ENCODE measurements at regions of chr5 and their contacts with region 1.

Region 1: GRCh38 chr5:39283231-39283818 is 64.0 kb upstream of the FYB1 start:
- DNase-seq: peak; percentile 65 to 83
- ATAC-seq: peak; percentile 98 to 100
- H3K4me3 ChIP-seq: no peak overlapping the region
- H3K27ac ChIP-seq: peak overlapping the region; percentile 65 to 79
- H3K4me1 ChIP-seq: peaks cover 12% of the 10 kb centered on the region; the same call in 1 of the 3 replicates
- CTCF ChIP-seq: peak; percentile 84
- EP300 ChIP-seq: no peak
- POLR2A ChIP-seq: no peak
- RAD21 ChIP-seq: peak; percentile 95 to 96

Region 2: DNA sequence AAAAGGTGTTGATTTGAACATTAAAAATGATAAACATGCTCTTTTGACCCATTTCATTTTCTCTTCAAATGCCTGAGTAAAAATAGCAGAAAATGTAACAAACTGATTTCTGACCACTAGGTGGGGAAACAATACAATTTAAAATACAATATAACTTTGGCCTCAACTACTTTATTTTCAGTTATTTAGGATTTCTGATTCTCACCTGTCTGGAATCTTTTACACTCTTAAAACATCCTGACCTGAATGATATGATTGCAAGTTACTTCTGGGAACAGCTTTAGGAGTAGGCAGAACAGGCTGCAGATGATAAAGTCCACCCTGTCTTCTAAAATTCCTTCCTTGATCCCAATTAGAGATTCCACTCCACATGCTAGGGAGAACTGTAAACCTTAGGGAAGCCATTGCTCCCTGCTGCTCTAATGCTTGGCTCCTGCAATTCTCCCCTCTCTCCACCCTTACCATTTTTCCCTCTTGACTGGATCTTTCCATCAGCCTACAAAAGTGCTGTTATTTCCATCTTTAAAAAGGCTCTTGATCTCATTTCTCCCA is 134.3 kb before region 1 on chr5:
- CTCF ChIA-PET with region 1: interaction called, 20 read pairs
- POLR2A ChIA-PET with region 1: no interaction called
- DNase-seq: peak in 1 of 2 experiments; percentile 38
- ATAC-seq: peak in 1 of 2 experiments; percentile 67; a peak in 3 of 6 replicates
- H3K4me3 ChIP-seq: no peak overlapping the region
- H3K27ac ChIP-seq: peak overlapping the region; percentile 52 to 66; a peak in 5 of 6 replicates
- H3K4me1 ChIP-seq: peaks cover 9% of the 10 kb centered on the region
- CTCF ChIP-seq: peak; percentile 66
- EP300 ChIP-seq: no peak
- POLR2A ChIP-seq: no peak
- RAD21 ChIP-seq: peak; percentile 78 to 82

Region 3: GRCh38 chr5:39211773-39212172 is 71.6 kb before region 1 on chr5:
- CTCF ChIA-PET with region 1: interaction called, 107 read pairs
- POLR2A ChIA-PET with region 1: no interaction called
- DNase-seq: no peak
- ATAC-seq: no peak
- H3K4me3 ChIP-seq: no peak overlapping the region
- H3K27ac ChIP-seq: no peak overlapping the region
- H3K4me1 ChIP-seq: 0 out of 3 replicates have a peak, but pooled peaks cover 9% of the 10 kb centered on the region
- CTCF ChIP-seq: no peak
- EP300 ChIP-seq: no peak
- POLR2A ChIP-seq: no peak
- RAD21 ChIP-seq: no peak

Region 4: GRCh38 chr5:39266442-39266841 is 16.9 kb before region 1 on chr5:
- CTCF ChIA-PET with region 1: interaction called, 14 read pairs
- POLR2A ChIA-PET with region 1: no interaction called
- DNase-seq: peak in 1 of 2 experiments; percentile 23
- ATAC-seq: no peak
- H3K4me3 ChIP-seq: no peak overlapping the region
- H3K27ac ChIP-seq: 0 out of 6 replicates have a peak overlapping the region, but pooled peaks of 1 of the 2 experiments have one; percentile 36
- H3K4me1 ChIP-seq: peaks cover 4% of the 10 kb centered on the region; the same call in 2 of the 3 replicates
- CTCF ChIP-seq: no peak
- EP300 ChIP-seq: no peak
- POLR2A ChIP-seq: no peak
- RAD21 ChIP-seq: no peak